MCF 10A (cell line): ENCODE measurements at regions of chr7 and their contacts with region 1.

Region 1: GRCh38 chr7:123748734-123749536 is at the start of gene WASL:
- DNase-seq: peak; percentile 87
- H3K4me3 Mint-ChIP-seq: peak within 1 kb of the TSS; percentile 98
- H3K27ac Mint-ChIP-seq: peak within 1 kb of the TSS; percentile 99
- H3K4me1 Mint-ChIP-seq: peaks cover 44% of the 10 kb centered on the region
- H3K27me3 Mint-ChIP-seq: no peaks in the 10 kb centered on the region
- CTCF ChIP-seq: no peak
- total RNA-seq, gene WASL: 34.7 and 38.8 TPM in 2 replicates

Region 2: DNA sequence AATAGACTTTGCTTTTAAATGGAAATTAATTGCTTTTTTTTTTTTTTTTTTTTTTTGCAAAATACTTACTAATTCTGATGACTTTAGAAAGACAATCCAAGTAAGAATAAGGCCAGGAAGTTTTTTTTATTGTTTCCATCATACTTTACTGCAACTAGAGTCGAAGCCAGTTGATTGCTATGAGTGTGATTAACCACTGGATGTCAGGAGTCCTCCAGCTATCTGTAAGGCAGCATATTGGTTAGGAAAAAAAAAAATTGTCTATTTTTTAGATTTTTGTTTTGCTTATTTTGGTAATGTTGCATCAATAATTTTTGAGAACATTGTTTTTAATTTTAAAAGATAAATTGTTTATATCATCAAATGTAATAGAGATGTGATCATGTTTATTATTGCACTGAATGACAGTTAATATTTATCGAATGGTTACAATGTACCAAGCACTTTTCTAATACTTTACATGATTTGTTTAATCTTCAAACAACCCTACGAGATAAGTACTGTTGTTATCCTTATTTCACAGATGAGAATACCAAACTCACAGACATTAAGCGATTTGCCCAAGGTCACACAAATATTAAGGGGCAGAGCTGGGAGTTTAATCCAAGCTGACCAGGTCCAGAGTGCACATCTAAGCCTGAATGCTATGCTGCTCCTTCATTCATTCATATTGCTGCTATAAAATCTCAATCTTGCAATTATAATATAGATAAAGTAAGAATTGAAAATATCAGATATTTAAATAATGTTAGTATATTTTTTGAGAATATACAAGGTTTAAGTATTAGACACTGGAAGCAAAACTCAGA is 113.2 kb before region 1 on chr7:
- CTCF ChIA-PET with region 1: no interaction called
- POLR2A ChIA-PET with region 1: interaction called, 19 read pairs
- intact Hi-C with region 1: loop called (anchors 1 kb)
- DNase-seq: peak; percentile 59
- H3K4me3 Mint-ChIP-seq: no peak overlapping the region
- H3K27ac Mint-ChIP-seq: no peak overlapping the region
- H3K4me1 Mint-ChIP-seq: peaks cover 22% of the 10 kb centered on the region
- H3K27me3 Mint-ChIP-seq: no peaks in the 10 kb centered on the region
- CTCF ChIP-seq: peak; percentile 70

Region 3: GRCh38 chr7:123692471-123692877 is 56.5 kb before region 1 on chr7:
- CTCF ChIA-PET with region 1: interaction called, 3 read pairs
- POLR2A ChIA-PET with region 1: interaction called, 11 read pairs
- intact Hi-C with region 1: no loop called
- DNase-seq: no peak
- H3K4me3 Mint-ChIP-seq: no peak overlapping the region
- H3K27ac Mint-ChIP-seq: no peak overlapping the region
- H3K4me1 Mint-ChIP-seq: no peaks in the 10 kb centered on the region
- H3K27me3 Mint-ChIP-seq: no peaks in the 10 kb centered on the region
- CTCF ChIP-seq: no peak

Region 4: DNA sequence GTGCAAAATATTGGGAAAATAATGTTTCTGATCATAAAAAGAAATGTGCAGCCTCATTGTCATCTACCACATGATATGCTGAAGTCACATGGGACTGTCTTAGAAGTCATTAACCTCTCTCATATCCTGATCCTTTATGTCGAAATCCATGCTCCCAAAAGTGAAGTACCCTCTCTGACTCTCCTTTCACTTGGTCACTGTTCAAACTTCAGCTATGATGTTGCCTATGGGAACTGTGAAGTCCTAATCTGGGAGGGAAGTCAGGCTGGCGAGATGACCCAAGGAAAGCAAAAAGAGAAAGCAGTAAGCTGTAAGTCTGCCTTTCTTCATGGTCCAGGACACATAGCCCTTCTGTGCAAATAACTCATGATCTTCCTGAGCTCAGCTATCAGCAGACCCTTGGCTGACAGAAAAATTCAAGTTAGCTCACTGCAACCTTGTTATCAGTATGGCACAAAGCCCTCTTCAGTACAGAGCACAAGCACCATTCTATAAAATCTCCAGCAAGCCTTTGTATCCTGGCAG is 29.7 kb before region 1 on chr7:
- CTCF ChIA-PET with region 1: interaction called, 6 read pairs
- POLR2A ChIA-PET with region 1: interaction called, 18 read pairs
- intact Hi-C with region 1: no loop called
- DNase-seq: no peak
- H3K4me3 Mint-ChIP-seq: no peak overlapping the region
- H3K27ac Mint-ChIP-seq: peak overlapping the region; percentile 14
- H3K4me1 Mint-ChIP-seq: peaks cover 31% of the 10 kb centered on the region
- H3K27me3 Mint-ChIP-seq: no peaks in the 10 kb centered on the region
- CTCF ChIP-seq: no peak

Region 5: DNA sequence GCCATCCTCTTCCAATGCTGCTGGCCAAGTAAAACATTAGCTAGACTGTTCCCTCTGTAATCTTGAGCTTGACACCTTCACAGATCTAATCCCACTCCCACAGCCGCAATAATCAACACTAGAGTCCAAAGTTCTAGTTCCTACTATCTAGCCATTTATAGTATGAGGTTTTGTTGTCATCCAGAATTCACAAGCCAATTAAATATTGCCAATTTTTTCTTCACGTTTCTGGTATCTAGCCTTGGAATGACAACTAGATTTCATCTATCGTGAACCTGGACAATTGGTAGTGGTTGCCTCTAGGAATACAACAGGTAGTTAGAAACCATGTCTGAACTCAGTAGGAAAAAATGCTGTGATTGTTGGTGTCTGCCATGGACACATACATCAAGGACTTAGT is 10.6 kb before region 1 on chr7:
- CTCF ChIA-PET with region 1: interaction called, 7 read pairs
- POLR2A ChIA-PET with region 1: interaction called, 28 read pairs
- intact Hi-C with region 1: no loop called
- DNase-seq: no peak
- H3K4me3 Mint-ChIP-seq: no peak overlapping the region
- H3K27ac Mint-ChIP-seq: no peak overlapping the region
- H3K4me1 Mint-ChIP-seq: peaks cover 10% of the 10 kb centered on the region
- H3K27me3 Mint-ChIP-seq: no peaks in the 10 kb centered on the region
- CTCF ChIP-seq: no peak

Region 6: GRCh38 chr7:123784263-123784662 is 35.3 kb after region 1 on chr7:
- CTCF ChIA-PET with region 1: no interaction called
- POLR2A ChIA-PET with region 1: interaction called, 31 read pairs
- intact Hi-C with region 1: no loop called
- DNase-seq: no peak
- H3K4me3 Mint-ChIP-seq: no peak overlapping the region
- H3K27ac Mint-ChIP-seq: no peak overlapping the region
- H3K4me1 Mint-ChIP-seq: no peaks in the 10 kb centered on the region
- H3K27me3 Mint-ChIP-seq: no peaks in the 10 kb centered on the region
- CTCF ChIP-seq: no peak